T-cell (primary cell): ENCODE measurements at regions of chr7 and their contacts with region 1.

Region 1: GRCh38 chr7:7595451-7595850 is 28.8 kb downstream of the MIOS start:
- DNase-seq: peak in 1 of 35 experiments; percentile 56
- ATAC-seq: no peak
- H3K4me3 ChIP-seq: no peak overlapping the region
- H3K4me3 Mint-ChIP-seq: no peak overlapping the region
- H3K27ac ChIP-seq: no peak overlapping the region
- H3K27ac Mint-ChIP-seq: no peak overlapping the region
- H3K4me1 ChIP-seq: no peaks in the 10 kb centered on the region
- H3K4me1 Mint-ChIP-seq: peaks cover 0 to 3% (median 0%) of the 10 kb centered on the region in 3 donors
- H3K27me3 ChIP-seq: no peaks in the 10 kb centered on the region
- H3K27me3 Mint-ChIP-seq: no peaks in the 10 kb centered on the region

Region 2: DNA sequence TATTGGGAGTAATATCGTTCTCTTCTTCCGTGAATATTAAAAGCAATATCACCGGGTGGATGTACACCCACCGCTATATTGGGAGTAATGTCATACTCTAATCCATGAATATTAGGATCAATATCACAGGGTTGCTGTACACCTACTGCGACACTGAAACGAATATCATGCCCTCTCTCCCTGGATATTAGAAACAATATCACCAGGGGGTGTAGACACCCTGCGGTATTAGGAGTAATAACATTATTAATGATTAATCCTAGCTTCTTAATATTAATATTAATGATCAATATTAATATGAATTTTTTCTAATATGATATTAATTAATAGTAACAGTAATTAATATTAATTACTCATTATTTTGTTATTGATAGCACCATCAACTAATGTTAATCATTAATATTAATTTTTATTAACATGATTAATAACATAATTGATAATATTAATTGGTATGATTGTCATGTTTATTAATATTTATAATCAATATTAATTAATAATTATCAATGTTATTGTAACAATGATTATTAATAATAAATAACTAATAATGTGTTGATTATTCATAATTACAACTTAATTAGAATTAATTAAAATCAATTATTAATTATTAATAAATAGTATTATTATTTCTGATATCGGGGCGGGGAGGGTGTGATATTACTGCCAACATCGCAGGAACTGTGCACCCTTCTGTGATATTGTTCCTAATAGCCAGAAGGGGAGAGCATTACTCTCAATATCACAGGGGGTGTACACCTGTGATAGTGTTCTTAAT is 534.4 kb before region 1 on chr7:
- CTCF ChIA-PET with region 1: no interaction called
- POLR2A ChIA-PET with region 1: no interaction called
- DNase-seq: no peak
- ATAC-seq: no peak
- H3K4me3 ChIP-seq: no peak overlapping the region
- H3K4me3 Mint-ChIP-seq: no peak overlapping the region
- H3K27ac ChIP-seq: no peak overlapping the region
- H3K27ac Mint-ChIP-seq: no peak overlapping the region
- H3K4me1 ChIP-seq: no peaks in the 10 kb centered on the region
- H3K4me1 Mint-ChIP-seq: no peaks in the 10 kb centered on the region
- H3K27me3 ChIP-seq: no peaks in the 10 kb centered on the region
- H3K27me3 Mint-ChIP-seq: peaks cover 22 to 28% of the 10 kb centered on the region in 2 donors

Region 3: GRCh38 chr7:7583731-7584130 is 11.7 kb before region 1 on chr7:
- CTCF ChIA-PET with region 1: interaction called in 1 of 2 experiments, 7 read pairs
- POLR2A ChIA-PET with region 1: interaction called in 1 of 2 experiments, 11 read pairs
- DNase-seq: no peak
- ATAC-seq: no peak
- H3K4me3 ChIP-seq: no peak overlapping the region
- H3K4me3 Mint-ChIP-seq: no peak overlapping the region
- H3K27ac ChIP-seq: no peak overlapping the region
- H3K27ac Mint-ChIP-seq: no peak overlapping the region
- H3K4me1 ChIP-seq: no peaks in the 10 kb centered on the region
- H3K4me1 Mint-ChIP-seq: peaks cover 0 to 1% (median 0%) of the 10 kb centered on the region in 3 donors
- H3K27me3 ChIP-seq: no peaks in the 10 kb centered on the region
- H3K27me3 Mint-ChIP-seq: no peaks in the 10 kb centered on the region

Region 4: DNA sequence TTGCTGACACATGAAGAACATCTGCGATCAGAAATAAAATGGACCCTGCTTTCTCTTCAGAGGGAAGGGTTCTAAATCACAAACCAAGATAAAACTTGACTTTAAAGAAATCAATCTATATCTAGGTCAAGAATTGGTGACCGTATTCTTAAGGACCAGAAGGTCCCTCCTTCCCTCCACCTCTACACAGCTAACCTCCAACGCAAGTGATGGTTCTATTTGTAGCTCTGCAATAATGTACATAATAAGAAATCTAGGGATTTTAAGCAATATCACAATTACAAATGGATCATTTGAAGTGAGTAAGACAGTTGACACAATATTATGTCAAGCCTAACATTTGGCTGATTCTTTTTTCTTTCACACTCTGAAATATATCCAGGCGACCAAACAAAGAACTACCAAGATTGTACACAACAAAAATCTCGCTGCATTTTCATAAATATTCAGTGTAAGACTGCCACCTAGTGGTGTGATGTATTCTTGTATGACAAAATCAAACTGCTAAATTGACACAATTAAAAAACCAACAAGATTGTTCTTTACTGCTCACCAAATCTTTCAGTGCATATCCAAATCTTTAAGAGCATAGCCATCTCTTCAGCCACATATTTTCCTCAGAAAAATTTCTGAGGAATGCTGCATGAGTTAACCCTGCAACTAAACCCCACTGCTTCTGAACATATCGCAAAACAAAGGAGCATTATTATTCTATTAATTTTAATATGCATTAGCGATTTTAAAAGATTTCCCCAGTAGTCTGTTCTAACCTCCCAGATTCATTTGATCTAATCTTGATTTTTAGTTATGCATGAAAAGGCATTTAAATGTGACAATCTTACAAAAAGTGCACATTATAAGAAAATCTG is 622.0 kb after region 1 on chr7:
- CTCF ChIA-PET with region 1: interaction called, 4 to 12 read pairs
- POLR2A ChIA-PET with region 1: no interaction called
- DNase-seq: peak in 12 of 35 experiments; percentile 4 to 85 (median 16)
- ATAC-seq: peak in 3 of 4 experiments; percentile 46 to 52 (median 51)
- H3K4me3 ChIP-seq: no peak overlapping the region
- H3K4me3 Mint-ChIP-seq: no peak overlapping the region
- H3K27ac ChIP-seq: no peak overlapping the region
- H3K27ac Mint-ChIP-seq: no peak overlapping the region
- H3K4me1 ChIP-seq: no peaks in the 10 kb centered on the region
- H3K4me1 Mint-ChIP-seq: peaks cover 0 to 4% (median 3%) of the 10 kb centered on the region in 3 donors
- H3K27me3 ChIP-seq: no peaks in the 10 kb centered on the region
- H3K27me3 Mint-ChIP-seq: no peaks in the 10 kb centered on the region